ENCODE measurements at regions of chr9 and their contacts with region 1.

Region 1: DNA sequence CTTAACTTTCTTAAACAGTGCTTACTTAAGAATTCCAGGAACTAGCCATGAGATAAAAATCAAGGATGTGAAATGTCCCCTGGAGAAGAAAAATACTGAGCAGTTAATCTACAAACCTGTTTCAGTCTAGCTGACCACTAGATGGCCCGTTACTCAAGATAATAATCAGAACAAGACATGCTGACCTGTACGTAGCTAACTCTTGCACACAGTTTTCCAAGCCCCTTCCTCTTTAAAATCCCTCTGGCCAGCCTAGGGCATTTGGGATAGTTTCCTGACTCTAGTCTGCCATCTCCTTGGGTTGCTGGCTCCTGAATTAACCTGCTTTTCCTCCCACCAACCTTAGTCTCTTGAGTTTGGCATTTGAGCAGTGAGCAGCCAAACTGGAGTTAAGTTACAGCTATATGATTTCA is 59.2 kb upstream of the TRAF1 start:
- DNase-seq: no peak
- ATAC-seq: no peak
- H3K4me3 Mint-ChIP-seq: no peak overlapping the region
- H3K27ac Mint-ChIP-seq: no peak overlapping the region
- H3K4me1 Mint-ChIP-seq: peaks cover 4% of the 10 kb centered on the region
- H3K27me3 Mint-ChIP-seq: no peaks in the 10 kb centered on the region
- CTCF ChIP-seq: peak; percentile 26

Region 2: GRCh38 chr9:120875954-120876841 is 109.6 kb before region 1 on chr9:
- CTCF ChIA-PET with region 1: no interaction called
- POLR2A ChIA-PET with region 1: no interaction called
- intact Hi-C with region 1: no loop called
- DNase-seq: peak; percentile 96
- ATAC-seq: peak; percentile 62
- H3K4me3 Mint-ChIP-seq: peak overlapping the region; percentile 91
- H3K27ac Mint-ChIP-seq: peak overlapping the region; percentile 93
- H3K4me1 Mint-ChIP-seq: peaks cover 75% of the 10 kb centered on the region
- H3K27me3 Mint-ChIP-seq: no peaks in the 10 kb centered on the region
- CTCF ChIP-seq: no peak

Region 3: GRCh38 chr9:120918931-120919638 is 66.7 kb before region 1 on chr9:
- CTCF ChIA-PET with region 1: no interaction called
- POLR2A ChIA-PET with region 1: no interaction called
- intact Hi-C with region 1: no loop called
- DNase-seq: no peak
- ATAC-seq: no peak
- H3K4me3 Mint-ChIP-seq: peak overlapping the region; percentile 88
- H3K27ac Mint-ChIP-seq: peak overlapping the region; percentile 94
- H3K4me1 Mint-ChIP-seq: peaks cover 62% of the 10 kb centered on the region
- H3K27me3 Mint-ChIP-seq: no peaks in the 10 kb centered on the region
- CTCF ChIP-seq: no peak

Region 4: DNA sequence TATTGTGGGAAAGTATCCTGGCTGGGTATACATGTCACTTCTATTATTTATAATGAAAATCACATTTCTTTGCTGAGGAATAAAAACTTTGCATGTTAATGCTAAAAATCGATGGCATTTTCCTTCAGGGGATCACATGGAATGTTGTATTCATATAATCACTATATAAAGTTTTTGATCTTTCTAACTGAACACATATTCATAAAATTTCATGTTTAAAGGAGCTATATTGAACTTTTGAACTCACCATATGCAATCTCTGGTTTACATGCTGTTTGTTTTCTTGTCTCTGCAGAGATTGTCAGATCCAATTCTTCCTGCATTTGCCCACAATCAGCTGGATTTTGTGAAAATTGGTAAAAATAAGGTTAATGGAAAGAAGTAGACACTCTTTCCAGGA is 25.8 kb before region 1 on chr9:
- CTCF ChIA-PET with region 1: interaction called, 25 read pairs
- POLR2A ChIA-PET with region 1: interaction called, 3 read pairs
- intact Hi-C with region 1: no loop called
- DNase-seq: no peak
- ATAC-seq: no peak
- H3K4me3 Mint-ChIP-seq: no peak overlapping the region
- H3K27ac Mint-ChIP-seq: no peak overlapping the region
- H3K4me1 Mint-ChIP-seq: no peaks in the 10 kb centered on the region
- H3K27me3 Mint-ChIP-seq: no peaks in the 10 kb centered on the region
- CTCF ChIP-seq: no peak

Region 5: GRCh38 chr9:120971938-120972337 is 13.9 kb before region 1 on chr9:
- CTCF ChIA-PET with region 1: interaction called, 10 read pairs
- POLR2A ChIA-PET with region 1: no interaction called
- intact Hi-C with region 1: no loop called
- DNase-seq: no peak
- ATAC-seq: peak; percentile 30
- H3K4me3 Mint-ChIP-seq: no peak overlapping the region
- H3K27ac Mint-ChIP-seq: no peak overlapping the region
- H3K4me1 Mint-ChIP-seq: peaks cover 23% of the 10 kb centered on the region
- H3K27me3 Mint-ChIP-seq: no peaks in the 10 kb centered on the region
- CTCF ChIP-seq: no peak

Region 6: GRCh38 chr9:121048618-121049017 is 62.8 kb after region 1 on chr9:
- CTCF ChIA-PET with region 1: interaction called, 12 read pairs
- POLR2A ChIA-PET with region 1: no interaction called
- intact Hi-C with region 1: no loop called
- DNase-seq: no peak
- ATAC-seq: no peak
- H3K4me3 Mint-ChIP-seq: no peak overlapping the region
- H3K27ac Mint-ChIP-seq: no peak overlapping the region
- H3K4me1 Mint-ChIP-seq: no peaks in the 10 kb centered on the region
- H3K27me3 Mint-ChIP-seq: no peaks in the 10 kb centered on the region
- CTCF ChIP-seq: no peak

Region 7: GRCh38 chr9:121074635-121075385 is 89.0 kb after region 1 on chr9 and contains the start of gene CNTRL:
- CTCF ChIA-PET with region 1: interaction called, 18 read pairs
- POLR2A ChIA-PET with region 1: interaction called, 3 read pairs
- intact Hi-C with region 1: loop called (anchors 5 kb)
- DNase-seq: peak; percentile 98
- ATAC-seq: peak; percentile 91
- H3K4me3 Mint-ChIP-seq: peak within 1 kb of the TSS; percentile 97
- H3K27ac Mint-ChIP-seq: peak within 1 kb of the TSS; percentile 97
- H3K4me1 Mint-ChIP-seq: peaks cover 38% of the 10 kb centered on the region
- H3K27me3 Mint-ChIP-seq: no peaks in the 10 kb centered on the region
- CTCF ChIP-seq: no peak
- total RNA-seq, gene CNTRL: 62.8 to 69.8 TPM

Measured in activated CD8-positive, alpha-beta T cell treated with anti-CD3 and anti-CD28 coated beads for 36 hours (primary cell).